K562 (cell line): ENCODE measurements at regions of chr11 and their contacts with region 1.

Region 1: DNA sequence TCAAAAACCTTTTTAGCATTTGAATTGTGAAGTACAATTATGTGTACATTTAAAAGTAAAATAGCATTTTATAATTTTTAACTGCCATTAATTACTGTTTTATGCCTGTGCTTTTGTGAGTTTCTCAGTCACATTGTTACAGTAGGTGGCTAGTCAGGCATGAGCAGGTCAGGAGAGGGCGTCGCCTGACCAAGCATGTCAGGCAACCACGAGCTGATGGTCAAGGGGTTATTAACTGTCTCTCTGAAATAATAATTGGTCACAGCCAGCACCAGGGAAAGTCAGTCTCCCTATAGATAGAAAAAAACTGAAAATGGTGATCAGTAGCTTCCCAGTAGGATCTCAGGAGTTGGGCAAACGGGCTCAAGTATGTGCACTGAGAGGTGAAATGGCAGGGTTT is 19.4 kb upstream of the CCDC81 start:
- DNase-seq: peak in 1 of 4 experiments; percentile 12
- ATAC-seq: peak; percentile 67
- H3K4me3 ChIP-seq: no peak overlapping the region
- H3K27ac ChIP-seq: no peak overlapping the region
- H3K4me1 ChIP-seq: no peaks in the 10 kb centered on the region
- H3K27me3 ChIP-seq: no peaks in the 10 kb centered on the region
- CTCF ChIP-seq: peak in 2 of 3 experiments; percentile 9 to 16; a peak in 1 of 6 replicates
- EP300 ChIP-seq: no peak
- POLR2A ChIP-seq: no peak
- RAD21 ChIP-seq: peak; percentile 5 to 44; a peak in 2 of 4 replicates

Region 2: DNA sequence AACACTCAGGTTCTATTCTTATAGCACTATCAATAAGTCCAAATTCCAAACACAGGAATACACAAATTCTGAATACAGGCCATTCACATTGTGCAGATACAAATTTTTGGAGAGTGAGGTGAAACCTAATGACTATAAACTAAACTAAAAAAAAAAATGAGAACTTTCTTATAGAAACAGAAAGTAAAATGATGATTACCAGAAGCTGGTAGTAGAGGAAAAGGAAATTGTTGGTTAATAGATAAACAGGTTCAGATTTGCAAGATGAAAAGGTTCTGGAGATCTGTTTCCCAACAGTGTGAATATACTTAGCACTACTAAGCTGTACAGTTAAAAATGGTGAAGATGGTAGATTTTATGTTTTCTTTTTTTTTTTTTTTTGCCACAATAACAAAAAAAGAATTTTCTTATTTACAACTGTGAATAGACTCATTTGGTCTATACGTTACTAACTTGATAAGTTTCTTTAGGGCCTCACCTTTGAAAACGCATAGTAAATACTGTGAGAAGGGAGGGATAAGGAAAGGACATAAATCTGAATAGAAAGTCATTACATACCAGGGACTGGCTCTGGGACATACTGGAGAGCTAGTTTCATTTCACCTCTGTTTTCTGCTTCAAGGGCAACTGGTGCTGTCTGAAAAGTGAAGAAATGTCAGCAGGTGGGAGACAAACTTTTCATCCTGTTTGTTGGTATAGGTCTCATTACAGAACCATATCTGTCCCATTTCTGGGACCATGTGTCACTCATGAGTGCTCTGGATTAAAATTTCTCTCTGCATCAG is 655.1 kb before region 1 on chr11:
- CTCF ChIA-PET with region 1: no interaction called
- POLR2A ChIA-PET with region 1: no interaction called
- in situ Hi-C with region 1: no loop called
- intact Hi-C with region 1: no loop called
- DNase-seq: no peak
- ATAC-seq: no peak
- H3K4me3 ChIP-seq: no peak overlapping the region
- H3K27ac ChIP-seq: no peak overlapping the region
- H3K4me1 ChIP-seq: no peaks in the 10 kb centered on the region
- H3K27me3 ChIP-seq: no peaks in the 10 kb centered on the region
- CTCF ChIP-seq: no peak
- EP300 ChIP-seq: no peak
- POLR2A ChIP-seq: no peak
- RAD21 ChIP-seq: no peak

Region 3: DNA sequence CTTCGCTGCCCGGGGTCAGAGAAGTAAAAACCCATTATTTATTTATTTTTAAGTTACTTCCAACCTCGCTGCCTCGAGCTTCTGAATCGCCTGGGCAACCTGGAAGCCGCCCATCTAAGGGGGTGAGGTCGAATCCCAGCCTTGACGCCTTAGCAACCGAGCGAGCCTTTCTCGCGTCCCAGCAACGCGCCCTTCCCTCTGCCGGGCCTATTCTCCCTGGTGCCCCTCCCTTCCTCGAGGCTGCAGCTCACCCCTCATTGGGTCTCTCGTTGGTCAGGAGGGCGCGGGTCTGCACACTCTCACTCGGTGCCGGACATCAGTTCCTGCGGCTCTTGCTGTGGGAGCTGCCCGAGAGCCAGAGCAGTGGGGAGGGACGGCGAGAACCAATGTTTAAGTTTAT is 19.3 kb after region 1 on chr11 and contains the start of gene CCDC81:
- CTCF ChIA-PET with region 1: no interaction called
- POLR2A ChIA-PET with region 1: no interaction called
- in situ Hi-C with region 1: no loop called
- intact Hi-C with region 1: no loop called
- DNase-seq: no peak
- ATAC-seq: no peak; the same call in 1 of the 3 replicates
- H3K4me3 ChIP-seq: no peak within 1 kb of the TSS
- H3K27ac ChIP-seq: no peak within 1 kb of the TSS
- H3K4me1 ChIP-seq: peaks cover 0 to 4% of the 10 kb centered on the region in 2 experiments; a peak in 3 of 5 replicates
- H3K27me3 ChIP-seq: no peaks in the 10 kb centered on the region; a peak in 1 of 5 replicates
- CTCF ChIP-seq: no peak
- EP300 ChIP-seq: no peak
- POLR2A ChIP-seq: no peak
- RAD21 ChIP-seq: no peak
- polyA plus RNA-seq, gene CCDC81: 0.24 to 0.41 TPM

Region 4: DNA sequence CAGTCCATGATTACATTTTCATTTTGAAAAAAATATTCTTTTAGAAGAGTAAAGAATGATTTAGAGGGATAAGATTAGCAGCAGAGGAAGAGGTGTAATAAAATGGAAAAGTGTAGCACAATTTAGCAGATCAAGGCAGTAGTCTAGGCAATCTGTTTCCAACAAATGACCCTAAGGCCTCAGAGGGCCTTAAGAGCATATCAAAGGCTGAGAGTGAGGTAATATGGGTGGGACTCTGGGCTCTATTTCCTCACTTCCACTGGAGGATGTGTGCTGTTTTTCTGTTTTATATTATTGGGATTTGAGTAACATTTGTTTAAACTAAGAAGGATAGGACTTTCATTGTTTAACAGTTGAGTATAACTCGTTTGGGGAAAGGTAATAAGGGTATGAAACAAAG is 48.2 kb after region 1 on chr11:
- CTCF ChIA-PET with region 1: no interaction called
- POLR2A ChIA-PET with region 1: no interaction called
- in situ Hi-C with region 1: no loop called
- intact Hi-C with region 1: loop called (anchors 5 kb)
- DNase-seq: no peak
- ATAC-seq: no peak
- H3K4me3 ChIP-seq: no peak overlapping the region
- H3K27ac ChIP-seq: no peak overlapping the region
- H3K4me1 ChIP-seq: no peaks in the 10 kb centered on the region
- H3K27me3 ChIP-seq: no peaks in the 10 kb centered on the region
- CTCF ChIP-seq: no peak
- EP300 ChIP-seq: no peak
- POLR2A ChIP-seq: no peak
- RAD21 ChIP-seq: no peak

Region 5: DNA sequence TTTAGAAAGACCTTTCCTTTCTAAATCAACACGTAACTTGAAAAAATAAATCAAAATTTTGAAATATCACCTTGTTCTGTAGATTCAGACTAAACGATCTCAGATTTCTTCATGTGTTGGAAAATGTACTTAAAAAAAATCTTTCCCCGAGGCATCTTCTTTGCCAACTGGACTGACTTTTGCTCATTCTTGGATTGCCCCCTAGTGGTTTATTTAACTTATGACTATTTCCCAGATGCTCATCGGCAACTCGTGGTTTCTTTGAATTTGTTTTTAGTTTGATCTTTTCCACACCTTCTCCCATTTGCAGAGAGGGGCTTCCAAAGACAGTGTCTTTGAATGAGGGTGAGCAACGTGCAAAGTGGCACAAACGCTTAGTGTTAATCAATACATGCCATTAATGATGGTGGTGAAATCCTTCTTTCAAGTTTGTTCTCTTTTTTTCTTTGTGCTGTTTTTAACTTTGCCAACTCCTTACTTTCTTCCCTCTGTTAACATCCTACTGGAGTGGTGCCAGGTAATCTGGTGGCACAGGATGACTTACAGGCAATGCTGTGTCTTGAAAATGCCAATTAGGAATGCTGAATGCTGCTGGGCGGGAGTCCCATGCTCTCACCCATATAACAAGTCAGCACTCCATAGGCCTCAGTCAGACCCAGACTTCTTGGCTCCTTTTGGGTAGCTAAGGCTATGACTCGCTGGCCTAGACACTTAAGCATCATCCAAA is 463.4 kb after region 1 on chr11:
- CTCF ChIA-PET with region 1: interaction called, 3 read pairs
- POLR2A ChIA-PET with region 1: no interaction called
- in situ Hi-C with region 1: no loop called
- intact Hi-C with region 1: loop called (anchors 5 kb)
- DNase-seq: peak; percentile 49 to 64 (median 55)
- ATAC-seq: peak; percentile 77
- H3K4me3 ChIP-seq: no peak overlapping the region
- H3K27ac ChIP-seq: no peak overlapping the region
- H3K4me1 ChIP-seq: no peaks in the 10 kb centered on the region
- H3K27me3 ChIP-seq: peaks cover 0 to 14% of the 10 kb centered on the region in 2 experiments; a peak in 2 of 5 replicates
- CTCF ChIP-seq: peak; percentile 61 to 88 (median 67)
- EP300 ChIP-seq: no peak
- POLR2A ChIP-seq: no peak
- RAD21 ChIP-seq: peak; percentile 93 to 95